Adrenal gland (tissue), 19 donors: ENCODE measurements at regions of chr3 and their contacts with region 1.

Region 1: GRCh38 chr3:113043686-113044085 is 52.9 kb downstream of the GTPBP8 start:
- DNase-seq: no peak
- H3K4me3 ChIP-seq: no peak overlapping the region
- H3K27ac ChIP-seq: no peak overlapping the region
- H3K4me1 ChIP-seq: no peaks in the 10 kb centered on the region
- H3K27me3 ChIP-seq: no peaks in the 10 kb centered on the region
- CTCF ChIP-seq: no peak
- POLR2A ChIP-seq: no peak

Region 2: DNA sequence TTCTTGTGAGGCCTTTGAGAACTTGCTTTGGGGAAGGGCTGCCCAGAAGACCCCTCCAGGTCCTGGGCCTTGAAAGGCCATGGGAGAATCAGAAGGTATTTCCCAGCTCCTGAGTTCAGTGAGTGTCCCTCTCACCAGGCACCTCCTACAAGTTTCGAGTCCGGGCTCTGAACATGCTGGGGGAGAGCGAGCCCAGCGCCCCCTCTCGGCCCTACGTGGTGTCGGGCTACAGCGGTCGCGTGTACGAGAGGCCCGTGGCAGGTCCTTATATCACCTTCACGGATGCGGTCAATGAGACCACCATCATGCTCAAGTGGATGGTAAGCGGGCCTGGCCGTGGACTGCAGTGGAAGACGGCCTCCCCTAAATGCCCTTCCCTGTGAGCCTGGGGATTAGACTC is 236.0 kb after region 1 on chr3:
- intact Hi-C with region 1: loop called in 1 of 2 experiments (anchors 5 kb)
- DNase-seq: no peak
- H3K4me3 ChIP-seq: no peak overlapping the region
- H3K27ac ChIP-seq: no peak overlapping the region
- H3K4me1 ChIP-seq: peaks cover 0 to 19% of the 10 kb centered on the region in 2 donors
- H3K27me3 ChIP-seq: no peaks in the 10 kb centered on the region
- CTCF ChIP-seq: no peak
- POLR2A ChIP-seq: no peak